H1 (cell line): ENCODE measurements at regions of chr15 and their contacts with region 1.

Region 1: DNA sequence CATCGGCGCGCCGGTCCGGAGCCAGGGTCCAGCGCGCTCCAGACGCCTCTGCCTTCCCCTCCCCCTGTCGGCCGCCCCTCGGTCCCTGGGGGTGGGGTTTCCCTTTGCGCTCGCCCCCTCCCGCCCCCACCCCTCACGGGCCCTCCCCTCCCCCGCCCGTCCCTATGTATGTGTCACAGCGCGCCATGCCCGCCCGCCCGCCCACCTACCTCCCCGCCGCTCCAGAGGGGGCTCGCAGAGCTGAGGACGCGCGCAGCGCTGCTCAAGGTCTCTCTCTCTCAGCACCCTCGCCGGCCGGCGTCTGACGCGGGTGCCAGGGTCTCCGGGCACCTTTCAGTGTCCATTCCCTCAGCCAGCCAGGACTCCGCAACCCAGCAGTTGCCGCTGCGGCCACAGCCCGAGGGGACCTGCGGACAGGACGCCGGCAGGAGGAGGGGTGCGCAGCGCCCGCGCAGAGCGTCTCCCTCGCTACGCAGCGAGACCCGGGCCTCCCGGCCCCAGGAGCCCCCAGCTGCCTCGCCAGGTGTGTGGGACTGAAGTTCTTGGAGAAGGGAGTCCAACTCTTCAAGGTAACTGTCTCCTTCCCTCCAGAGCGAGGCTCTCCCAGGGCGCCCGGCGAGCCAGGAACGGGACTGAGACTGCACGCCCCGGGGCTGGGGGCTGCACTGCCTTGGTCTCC is at the start of gene ACAN:
- DNase-seq: peak in 1 of 2 experiments; percentile 80
- H3K4me3 ChIP-seq: peak within 1 kb of the TSS; percentile 30 to 74 (median 73)
- H3K27ac ChIP-seq: no peak within 1 kb of the TSS
- H3K4me1 ChIP-seq: no peaks in the 10 kb centered on the region; a peak in 4 of 7 replicates
- H3K27me3 ChIP-seq: peaks cover 20 to 59% (median 46%) of the 10 kb centered on the region in 4 experiments
- CTCF ChIP-seq: no peak
- EP300 ChIP-seq: no peak
- POLR2A ChIP-seq: no peak
- RAD21 ChIP-seq: no peak
- total RNA-seq, gene ACAN: 0.67 and 0.71 TPM in 2 replicates

Region 2: GRCh38 chr15:88791637-88792036 is 11.7 kb before region 1 on chr15:
- CTCF ChIA-PET with region 1: interaction called, 18 read pairs
- POLR2A ChIA-PET with region 1: interaction called, 7 read pairs
- DNase-seq: no peak
- H3K4me3 ChIP-seq: no peak overlapping the region
- H3K27ac ChIP-seq: no peak overlapping the region
- H3K4me1 ChIP-seq: peaks cover 6 to 10% (median 6%) of the 10 kb centered on the region in 4 experiments
- H3K27me3 ChIP-seq: peaks cover 0 to 9% (median 1%) of the 10 kb centered on the region in 4 experiments; a peak in 3 of 7 replicates
- CTCF ChIP-seq: no peak
- EP300 ChIP-seq: no peak
- POLR2A ChIP-seq: no peak
- RAD21 ChIP-seq: no peak

Region 3: GRCh38 chr15:88814393-88814792 is 11.0 kb after region 1 on chr15:
- CTCF ChIA-PET with region 1: interaction called, 16 read pairs
- POLR2A ChIA-PET with region 1: no interaction called
- DNase-seq: no peak
- H3K4me3 ChIP-seq: no peak overlapping the region
- H3K27ac ChIP-seq: no peak overlapping the region
- H3K4me1 ChIP-seq: peaks cover 0 to 2% (median 1%) of the 10 kb centered on the region in 4 experiments; a peak in 4 of 7 replicates
- H3K27me3 ChIP-seq: no peaks in the 10 kb centered on the region
- CTCF ChIP-seq: no peak
- EP300 ChIP-seq: no peak
- POLR2A ChIP-seq: no peak
- RAD21 ChIP-seq: no peak